CD8-positive, alpha-beta T cell (primary cell): ENCODE measurements at regions of chr1 and their contacts with region 1.

Region 1: GRCh38 chr1:30801771-30802198 is 44.2 kb upstream of the LAPTM5 start:
- DNase-seq: peak; percentile 65 to 88 (median 80)
- ATAC-seq: peak; percentile 87
- H3K4me3 ChIP-seq: no peak overlapping the region
- H3K4me3 Mint-ChIP-seq: no peak overlapping the region
- H3K27ac ChIP-seq: no peak overlapping the region
- H3K27ac Mint-ChIP-seq: no peak overlapping the region
- H3K4me1 ChIP-seq: no peaks in the 10 kb centered on the region
- H3K4me1 Mint-ChIP-seq: peaks cover 6% of the 10 kb centered on the region
- H3K27me3 ChIP-seq: peaks cover 0 to 3% of the 10 kb centered on the region in 2 experiments
- H3K27me3 Mint-ChIP-seq: peaks cover 31% of the 10 kb centered on the region
- CTCF ChIP-seq: peak; percentile 90

Region 2: DNA sequence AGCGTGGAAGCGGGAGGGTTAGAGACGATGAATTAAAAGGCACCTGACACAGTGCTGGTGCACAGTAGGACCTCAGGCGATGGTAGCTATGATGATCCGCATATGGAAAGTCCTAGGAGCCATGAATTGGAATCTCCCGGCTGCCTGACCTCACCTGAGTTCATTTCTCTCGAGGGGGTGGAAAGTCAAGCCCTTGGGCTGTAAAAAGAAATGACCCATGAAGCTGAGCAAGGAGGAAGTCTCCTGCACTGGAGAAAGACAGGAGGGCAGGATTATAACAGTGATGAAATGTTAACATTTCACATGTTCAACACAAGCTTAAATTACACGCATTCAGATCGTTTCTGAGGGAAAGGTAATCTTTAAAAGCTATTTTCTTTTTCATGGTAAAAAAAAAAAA is 559.6 kb before region 1 on chr1:
- CTCF ChIA-PET with region 1: no interaction called
- POLR2A ChIA-PET with region 1: no interaction called
- intact Hi-C with region 1: no loop called
- DNase-seq: no peak
- ATAC-seq: no peak
- H3K4me3 ChIP-seq: no peak overlapping the region
- H3K4me3 Mint-ChIP-seq: no peak overlapping the region
- H3K27ac ChIP-seq: no peak overlapping the region
- H3K27ac Mint-ChIP-seq: no peak overlapping the region
- H3K4me1 ChIP-seq: no peaks in the 10 kb centered on the region
- H3K4me1 Mint-ChIP-seq: no peaks in the 10 kb centered on the region
- H3K27me3 ChIP-seq: no peaks in the 10 kb centered on the region
- H3K27me3 Mint-ChIP-seq: peaks cover 29% of the 10 kb centered on the region
- CTCF ChIP-seq: no peak

Region 3: DNA sequence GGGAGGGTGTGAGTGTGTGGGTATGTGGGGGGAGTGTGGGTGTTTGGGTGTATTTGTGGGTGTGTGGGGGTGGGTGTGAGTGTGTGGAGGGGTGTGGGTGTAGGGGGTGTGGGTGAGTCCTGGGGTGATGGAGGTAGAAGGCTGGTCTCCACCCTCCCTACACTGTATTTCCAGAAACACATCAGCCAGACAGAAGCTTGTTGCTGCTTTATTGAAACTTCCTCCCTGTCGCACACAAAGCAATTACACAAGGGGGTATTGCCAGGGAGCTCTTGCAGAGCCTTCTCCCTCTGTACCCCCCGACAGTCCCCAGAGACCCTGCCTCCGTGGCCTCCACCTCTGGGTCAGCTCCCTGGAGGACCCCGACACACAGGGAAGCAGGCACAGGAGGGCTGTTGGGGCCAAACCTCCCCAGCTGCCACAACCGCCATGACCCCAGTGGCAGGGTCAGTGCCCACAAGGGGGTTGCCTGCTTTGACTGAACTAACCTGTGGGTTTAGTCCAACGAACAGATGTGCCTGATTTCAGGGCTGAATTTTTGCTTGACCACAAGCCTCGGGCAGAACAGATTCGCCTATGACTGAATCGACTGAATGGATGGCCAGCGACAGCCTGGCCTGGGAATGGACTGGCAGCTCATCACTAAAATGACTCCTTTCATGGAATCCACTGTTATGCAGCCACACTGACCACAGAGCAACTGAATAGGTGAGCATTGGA is 69.3 kb before region 1 on chr1:
- CTCF ChIA-PET with region 1: interaction called, 10 read pairs
- POLR2A ChIA-PET with region 1: no interaction called
- intact Hi-C with region 1: no loop called
- DNase-seq: peak in 2 of 9 experiments; percentile 53 to 68
- ATAC-seq: peak; percentile 69
- H3K4me3 ChIP-seq: no peak overlapping the region
- H3K4me3 Mint-ChIP-seq: no peak overlapping the region
- H3K27ac ChIP-seq: peak overlapping the region; percentile 10 to 56
- H3K27ac Mint-ChIP-seq: peak overlapping the region; percentile 76
- H3K4me1 ChIP-seq: peaks cover 13% of the 10 kb centered on the region
- H3K4me1 Mint-ChIP-seq: peaks cover 32% of the 10 kb centered on the region
- H3K27me3 ChIP-seq: no peaks in the 10 kb centered on the region
- H3K27me3 Mint-ChIP-seq: no peaks in the 10 kb centered on the region
- CTCF ChIP-seq: no peak

Region 4: GRCh38 chr1:30790850-30791778 is 10.7 kb before region 1 on chr1:
- CTCF ChIA-PET with region 1: interaction called, 23 read pairs
- POLR2A ChIA-PET with region 1: interaction called, 3 read pairs
- intact Hi-C with region 1: no loop called
- DNase-seq: peak in 3 of 9 experiments; percentile 18 to 68 (median 56)
- ATAC-seq: peak; percentile 69
- H3K4me3 ChIP-seq: no peak overlapping the region
- H3K4me3 Mint-ChIP-seq: no peak overlapping the region
- H3K27ac ChIP-seq: no peak overlapping the region
- H3K27ac Mint-ChIP-seq: no peak overlapping the region
- H3K4me1 ChIP-seq: peaks cover 9% of the 10 kb centered on the region
- H3K4me1 Mint-ChIP-seq: peaks cover 7% of the 10 kb centered on the region
- H3K27me3 ChIP-seq: peaks cover 0 to 4% of the 10 kb centered on the region in 2 experiments
- H3K27me3 Mint-ChIP-seq: peaks cover 15% of the 10 kb centered on the region
- CTCF ChIP-seq: no peak

Region 5: DNA sequence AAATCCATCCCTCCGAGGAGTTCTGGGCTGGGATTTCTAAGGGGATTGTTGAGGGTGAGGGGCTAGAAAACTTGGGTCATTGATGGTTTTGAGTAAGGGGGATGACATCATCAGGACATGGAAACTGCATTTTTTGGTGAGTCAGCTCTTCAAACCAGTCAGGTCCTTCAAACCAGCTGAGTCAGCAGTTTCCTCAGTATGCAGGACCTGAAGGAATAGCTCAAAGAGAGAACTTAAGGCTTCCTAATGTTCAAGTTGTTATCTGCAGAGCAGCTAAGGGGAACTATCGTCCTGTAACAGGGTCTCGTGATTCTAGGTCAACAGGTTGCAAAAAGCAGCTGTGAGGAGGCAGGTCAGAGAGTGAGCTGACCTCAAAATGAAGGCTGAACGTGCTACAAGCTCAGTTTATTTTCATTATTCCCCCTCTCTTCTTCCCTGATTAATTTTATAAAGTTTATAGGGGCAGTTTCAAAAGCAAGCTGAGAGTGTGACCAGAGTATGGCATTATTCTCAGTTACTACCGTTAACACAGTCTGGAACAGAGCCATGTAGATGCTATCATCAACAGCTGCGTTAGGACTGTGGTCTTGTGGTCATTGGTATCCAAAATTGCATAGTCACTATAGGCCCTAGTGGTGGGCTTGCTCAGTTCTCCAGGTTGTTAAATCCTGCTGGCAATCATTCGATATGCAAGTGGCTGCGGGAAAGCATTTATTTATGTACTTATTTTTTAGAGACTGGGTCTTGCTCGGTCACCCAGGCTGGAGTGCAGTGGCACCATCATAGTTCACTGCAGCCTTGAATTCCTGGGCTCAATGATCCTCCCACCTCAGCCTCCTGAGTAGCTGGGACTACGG is 117.5 kb after region 1 on chr1:
- CTCF ChIA-PET with region 1: interaction called, 23 read pairs
- POLR2A ChIA-PET with region 1: no interaction called
- intact Hi-C with region 1: loop called in 1 of 2 experiments (anchors 5 kb)
- DNase-seq: peak in 2 of 9 experiments; percentile 15 to 25
- ATAC-seq: no peak
- H3K4me3 ChIP-seq: no peak overlapping the region
- H3K4me3 Mint-ChIP-seq: no peak overlapping the region
- H3K27ac ChIP-seq: no peak overlapping the region
- H3K27ac Mint-ChIP-seq: no peak overlapping the region
- H3K4me1 ChIP-seq: no peaks in the 10 kb centered on the region
- H3K4me1 Mint-ChIP-seq: no peaks in the 10 kb centered on the region
- H3K27me3 ChIP-seq: peaks cover 0 to 2% of the 10 kb centered on the region in 2 experiments
- H3K27me3 Mint-ChIP-seq: peaks cover 2% of the 10 kb centered on the region
- CTCF ChIP-seq: no peak

Region 6: DNA sequence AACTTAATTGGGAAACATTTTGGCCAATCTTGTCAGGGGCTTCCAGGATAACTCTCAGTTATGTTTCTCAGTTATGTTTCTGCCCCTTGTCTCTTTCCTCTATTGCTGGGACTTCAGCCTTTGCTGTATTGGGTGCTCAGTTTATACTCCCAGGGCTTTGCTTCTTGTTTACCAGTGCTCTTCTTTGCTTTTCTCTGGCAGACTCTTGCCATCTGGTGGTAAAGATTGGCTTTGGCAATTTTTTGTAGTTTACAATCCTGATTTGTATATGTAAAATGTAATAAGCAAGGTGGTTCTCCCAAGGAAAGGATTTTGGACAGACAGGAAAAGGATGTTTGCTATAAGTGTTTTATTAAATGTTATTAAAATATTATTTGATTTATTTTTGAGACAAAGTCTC is 533.2 kb after region 1 on chr1:
- CTCF ChIA-PET with region 1: no interaction called
- POLR2A ChIA-PET with region 1: no interaction called
- intact Hi-C with region 1: loop called in 1 of 2 experiments (anchors 5 kb)
- DNase-seq: peak in 2 of 9 experiments; percentile 28 to 45
- ATAC-seq: no peak
- H3K4me3 ChIP-seq: no peak overlapping the region
- H3K4me3 Mint-ChIP-seq: no peak overlapping the region
- H3K27ac ChIP-seq: no peak overlapping the region
- H3K27ac Mint-ChIP-seq: no peak overlapping the region
- H3K4me1 ChIP-seq: no peaks in the 10 kb centered on the region
- H3K4me1 Mint-ChIP-seq: peaks cover 2% of the 10 kb centered on the region
- H3K27me3 ChIP-seq: no peaks in the 10 kb centered on the region
- H3K27me3 Mint-ChIP-seq: no peaks in the 10 kb centered on the region
- CTCF ChIP-seq: no peak

Region 7: DNA sequence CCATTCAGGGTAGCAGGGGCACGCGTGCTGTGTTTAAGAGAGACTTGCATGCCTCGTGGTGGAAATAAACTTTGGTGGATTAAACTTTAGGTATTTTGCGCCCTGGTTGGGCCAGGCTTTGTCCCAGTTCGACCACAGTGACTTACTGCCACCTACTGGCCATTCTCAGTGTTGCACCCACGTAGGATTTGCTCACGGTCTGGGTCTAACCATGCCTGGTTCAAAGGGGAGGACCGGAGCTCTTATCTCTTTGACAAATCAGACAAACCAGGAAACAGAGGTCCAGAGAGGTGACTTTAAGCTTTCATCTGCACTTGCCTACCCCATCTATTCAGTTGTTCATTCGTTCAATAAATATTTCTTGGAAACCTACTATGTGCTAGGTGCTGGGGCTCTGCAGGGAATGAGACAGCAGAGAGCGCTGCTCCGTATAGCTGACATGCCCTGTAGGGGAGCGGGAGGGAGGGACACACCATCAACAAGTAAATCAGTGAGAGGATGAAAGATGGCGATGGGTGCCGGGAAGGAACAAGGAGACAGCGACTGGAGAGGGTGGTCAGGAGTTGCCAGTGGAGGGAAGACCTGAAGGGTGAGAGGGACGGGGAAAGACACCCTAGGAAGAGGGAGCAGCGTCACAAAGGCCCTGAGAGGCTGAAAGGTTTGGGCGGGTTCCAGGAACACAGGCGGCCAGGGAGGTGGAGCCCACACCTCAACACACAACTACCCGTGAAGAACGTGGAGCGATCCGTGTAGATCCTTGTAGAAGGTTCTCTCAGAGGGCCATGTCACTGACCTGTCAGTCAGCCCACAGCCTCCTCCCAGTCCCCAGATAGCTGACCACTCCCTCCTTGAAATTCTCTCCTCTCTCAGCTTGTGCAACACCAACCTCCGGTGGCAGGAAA is 747.4 kb after region 1 on chr1:
- CTCF ChIA-PET with region 1: no interaction called
- POLR2A ChIA-PET with region 1: no interaction called
- intact Hi-C with region 1: loop called (anchors 1 to 10 kb)
- DNase-seq: peak; percentile 77 to 93 (median 84)
- ATAC-seq: peak; percentile 100
- H3K4me3 ChIP-seq: peak overlapping the region in 1 of 2 experiments; percentile 12
- H3K4me3 Mint-ChIP-seq: peak overlapping the region; percentile 30
- H3K27ac ChIP-seq: no peak overlapping the region
- H3K27ac Mint-ChIP-seq: no peak overlapping the region
- H3K4me1 ChIP-seq: peaks cover 4% of the 10 kb centered on the region
- H3K4me1 Mint-ChIP-seq: peaks cover 10% of the 10 kb centered on the region
- H3K27me3 ChIP-seq: peaks cover 0 to 2% of the 10 kb centered on the region in 2 experiments
- H3K27me3 Mint-ChIP-seq: peaks cover 9% of the 10 kb centered on the region
- CTCF ChIP-seq: peak; percentile 91

Region 8: GRCh38 chr1:31593770-31594632 is 792.2 kb after region 1 on chr1:
- CTCF ChIA-PET with region 1: no interaction called
- POLR2A ChIA-PET with region 1: no interaction called
- intact Hi-C with region 1: no loop called
- DNase-seq: peak; percentile 24 to 75 (median 70)
- ATAC-seq: peak; percentile 91
- H3K4me3 ChIP-seq: no peak overlapping the region
- H3K4me3 Mint-ChIP-seq: no peak overlapping the region
- H3K27ac ChIP-seq: no peak overlapping the region
- H3K27ac Mint-ChIP-seq: no peak overlapping the region
- H3K4me1 ChIP-seq: no peaks in the 10 kb centered on the region
- H3K4me1 Mint-ChIP-seq: no peaks in the 10 kb centered on the region
- H3K27me3 ChIP-seq: peaks cover 0 to 5% of the 10 kb centered on the region in 2 experiments
- H3K27me3 Mint-ChIP-seq: peaks cover 21% of the 10 kb centered on the region
- CTCF ChIP-seq: peak; percentile 73